Endothelial cell of umbilical vein (primary cell): ENCODE measurements at regions of chr3 and their contacts with region 1.

Region 1: DNA sequence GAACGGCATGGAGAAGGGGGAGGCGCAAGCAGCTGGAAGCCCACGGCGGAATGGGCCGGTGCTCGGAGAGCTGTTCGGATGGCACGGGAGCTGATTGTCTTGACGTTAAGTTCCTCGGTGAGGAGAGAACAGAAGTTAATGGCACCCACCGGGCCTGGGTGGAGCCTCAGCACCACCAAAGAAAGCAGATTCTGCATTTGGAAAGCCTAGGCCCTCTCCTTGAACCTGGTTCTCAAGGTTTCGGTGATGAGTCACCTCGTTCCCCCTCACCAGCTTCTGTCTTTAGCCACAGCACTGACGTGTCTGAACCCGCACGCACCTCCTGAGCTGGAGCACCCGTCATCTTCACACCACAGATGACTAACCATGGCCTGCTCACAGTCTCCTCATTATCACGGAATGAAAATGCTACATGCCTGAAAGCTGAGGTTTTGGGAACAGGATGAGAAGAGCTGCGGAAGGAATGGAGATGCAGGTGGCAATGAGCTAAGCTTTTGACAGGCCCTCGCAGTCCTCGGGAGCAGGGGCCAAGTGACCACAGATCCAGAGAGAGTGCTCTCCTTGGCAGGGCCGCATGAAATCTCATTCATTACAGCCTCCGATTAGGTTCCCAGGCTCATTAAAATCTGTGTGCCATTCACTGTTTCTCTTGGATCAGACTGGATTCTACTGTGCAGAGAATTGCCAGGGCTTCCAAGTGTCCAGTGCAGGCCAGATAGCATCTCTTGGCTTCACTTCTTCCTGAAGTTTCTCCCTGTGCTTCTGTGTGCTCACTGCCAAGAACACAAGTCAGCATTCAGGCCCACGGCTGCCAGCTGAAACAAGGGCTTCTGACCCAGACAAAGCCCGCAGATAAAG is 96.3 kb upstream of the DLG1 start:
- DNase-seq: peak; percentile 94
- H3K4me3 ChIP-seq: no peak overlapping the region
- H3K27ac ChIP-seq: peak overlapping the region; percentile 90
- H3K4me1 ChIP-seq: peaks cover 33% of the 10 kb centered on the region
- H3K27me3 ChIP-seq: peaks cover 4 to 5% of the 10 kb centered on the region in 2 experiments
- CTCF ChIP-seq: no peak
- POLR2A ChIP-seq: no peak

Region 2: GRCh38 chr3:197309528-197310361 is 84.9 kb before region 1 on chr3:
- CTCF ChIA-PET with region 1: no interaction called
- POLR2A ChIA-PET with region 1: no interaction called
- dilution Hi-C with region 1: no loop called
- intact Hi-C with region 1: no loop called
- DNase-seq: peak; percentile 75
- H3K4me3 ChIP-seq: no peak overlapping the region
- H3K27ac ChIP-seq: peak overlapping the region; percentile 46
- H3K4me1 ChIP-seq: peaks cover 13% of the 10 kb centered on the region
- H3K27me3 ChIP-seq: no peaks in the 10 kb centered on the region
- CTCF ChIP-seq: no peak
- POLR2A ChIP-seq: no peak

Region 3: GRCh38 chr3:197406266-197406665 is 11.6 kb after region 1 on chr3:
- CTCF ChIA-PET with region 1: interaction called, 7 read pairs
- POLR2A ChIA-PET with region 1: no interaction called
- dilution Hi-C with region 1: no loop called
- intact Hi-C with region 1: loop called (anchors 1 kb)
- DNase-seq: peak; percentile 88
- H3K4me3 ChIP-seq: no peak overlapping the region
- H3K27ac ChIP-seq: peak overlapping the region; percentile 27
- H3K4me1 ChIP-seq: peaks cover 4% of the 10 kb centered on the region
- H3K27me3 ChIP-seq: no peaks in the 10 kb centered on the region
- CTCF ChIP-seq: no peak
- POLR2A ChIP-seq: no peak

Region 4: GRCh38 chr3:197456261-197457091 is 61.8 kb after region 1 on chr3:
- CTCF ChIA-PET with region 1: interaction called, 9 read pairs
- POLR2A ChIA-PET with region 1: no interaction called
- dilution Hi-C with region 1: no loop called
- intact Hi-C with region 1: loop called (anchors 1 kb)
- DNase-seq: peak; percentile 77
- H3K4me3 ChIP-seq: peak overlapping the region in 2 of 3 experiments; percentile 12 to 35
- H3K27ac ChIP-seq: peak overlapping the region; percentile 47
- H3K4me1 ChIP-seq: peaks cover 11% of the 10 kb centered on the region
- H3K27me3 ChIP-seq: no peaks in the 10 kb centered on the region
- CTCF ChIP-seq: no peak
- POLR2A ChIP-seq: peak; percentile 89